ENCODE measurements at regions of chr3 and their contacts with region 1.

Region 1: GRCh38 chr3:87674397-87675161 is 384.2 kb downstream of the CGGBP1 start:
- DNase-seq: peak; percentile 13
- H3K4me3 ChIP-seq: no peak overlapping the region
- H3K27ac ChIP-seq: no peak overlapping the region
- H3K4me1 ChIP-seq: peaks cover 11% of the 10 kb centered on the region
- CTCF ChIP-seq: no peak

Region 2: GRCh38 chr3:87727783-87728182 is 53.2 kb after region 1 on chr3:
- CTCF ChIA-PET with region 1: no interaction called
- POLR2A ChIA-PET with region 1: no interaction called
- intact Hi-C with region 1: loop called (anchors 10 kb)
- DNase-seq: no peak
- H3K4me3 ChIP-seq: no peak overlapping the region
- H3K27ac ChIP-seq: no peak overlapping the region
- H3K4me1 ChIP-seq: no peaks in the 10 kb centered on the region
- CTCF ChIP-seq: no peak

Measured in OCI-LY7 (cell line).